ENCODE measurements at regions of chr14 and their contacts with region 1.

Region 1: DNA sequence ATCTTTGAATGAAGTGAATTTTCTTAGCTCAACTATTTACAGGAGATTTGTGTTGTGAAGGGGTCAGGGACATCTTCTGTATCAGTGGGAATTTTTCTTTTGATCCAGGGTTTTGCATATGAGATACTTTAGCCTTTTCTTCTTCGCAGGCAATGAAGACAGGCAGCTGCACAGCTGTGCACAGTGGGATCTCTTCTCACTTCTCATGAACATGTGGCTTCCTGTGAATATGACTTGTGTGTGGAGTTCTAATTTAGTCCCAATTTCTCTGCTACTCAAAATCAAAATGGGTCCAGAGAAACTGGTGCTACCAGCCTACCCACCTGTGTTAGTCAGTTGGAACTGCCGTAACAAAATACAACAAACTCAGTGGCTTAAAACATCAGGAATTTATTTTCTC is 37.8 kb downstream of the ARF6 start:
- DNase-seq: no peak
- ATAC-seq: peak; percentile 42
- H3K4me3 ChIP-seq: no peak overlapping the region
- H3K27ac ChIP-seq: no peak overlapping the region
- H3K4me1 ChIP-seq: peaks cover 16% of the 10 kb centered on the region
- H3K27me3 ChIP-seq: no peaks in the 10 kb centered on the region
- CTCF ChIP-seq: no peak
- EP300 ChIP-seq: no peak
- POLR2A ChIP-seq: no peak
- RAD21 ChIP-seq: no peak

Region 2: GRCh38 chr14:49908432-49908781 is 22.3 kb before region 1 on chr14:
- CTCF ChIA-PET with region 1: interaction called, 3 read pairs
- POLR2A ChIA-PET with region 1: interaction called, 3 read pairs
- RAD21 ChIA-PET with region 1: no interaction called
- SMC1A ChIA-PET with region 1: interaction called, 11 read pairs
- in situ Hi-C with region 1: no loop called
- intact Hi-C with region 1: no loop called
- DNase-seq: no peak
- ATAC-seq: no peak
- H3K4me3 ChIP-seq: no peak overlapping the region
- H3K27ac ChIP-seq: no peak overlapping the region
- H3K4me1 ChIP-seq: no peaks in the 10 kb centered on the region
- H3K27me3 ChIP-seq: no peaks in the 10 kb centered on the region
- CTCF ChIP-seq: no peak
- EP300 ChIP-seq: no peak
- POLR2A ChIP-seq: no peak
- RAD21 ChIP-seq: no peak

Region 3: GRCh38 chr14:49940808-49941421 is 10.2 kb after region 1 on chr14:
- CTCF ChIA-PET with region 1: no interaction called
- POLR2A ChIA-PET with region 1: interaction called, 5 read pairs
- RAD21 ChIA-PET with region 1: no interaction called
- SMC1A ChIA-PET with region 1: interaction called, 13 read pairs
- in situ Hi-C with region 1: no loop called
- intact Hi-C with region 1: no loop called
- DNase-seq: no peak
- ATAC-seq: no peak
- H3K4me3 ChIP-seq: no peak overlapping the region
- H3K27ac ChIP-seq: no peak overlapping the region
- H3K4me1 ChIP-seq: no peaks in the 10 kb centered on the region; the same call in none of the 2 replicates
- H3K27me3 ChIP-seq: no peaks in the 10 kb centered on the region
- CTCF ChIP-seq: no peak
- EP300 ChIP-seq: no peak
- POLR2A ChIP-seq: no peak
- RAD21 ChIP-seq: no peak